Left cardiac atrium (tissue), 4 donors: ENCODE measurements at regions of chr1 and their contacts with region 1.

Region 1: DNA sequence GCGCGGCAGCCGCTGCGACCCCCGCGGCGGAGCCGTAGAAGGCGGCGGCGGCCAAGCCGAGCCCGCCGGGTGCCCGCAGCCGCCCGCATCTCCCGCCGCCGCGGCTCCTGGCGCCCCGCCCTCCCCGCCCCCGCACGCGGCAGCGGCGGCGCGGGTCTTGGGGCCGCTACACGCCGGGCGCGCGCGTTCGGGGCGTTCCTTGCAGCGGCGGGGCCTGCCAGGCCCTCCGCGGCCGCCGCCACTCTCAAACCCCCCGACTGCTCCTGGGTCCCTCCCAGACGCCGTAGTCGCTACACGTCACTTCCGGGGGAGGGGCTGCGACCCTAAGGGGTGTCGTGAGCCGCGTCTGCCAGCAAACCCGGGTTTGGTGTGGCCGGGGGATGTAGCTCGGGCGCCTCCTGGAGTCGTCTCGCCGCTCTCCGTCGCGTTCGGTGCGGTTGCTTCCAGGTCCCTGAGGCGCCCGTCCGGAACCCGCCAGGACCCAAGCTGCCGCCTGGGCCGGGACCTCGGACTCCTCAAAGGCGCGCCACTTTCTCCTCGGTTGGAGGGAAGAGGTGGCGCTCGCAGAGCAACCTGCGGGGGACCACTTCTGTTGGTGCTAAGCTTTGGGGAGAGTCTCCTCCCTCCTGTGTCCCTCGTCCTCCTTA is at the start of gene ELK4:
- DNase-seq: peak; percentile 99
- ATAC-seq: peak; percentile 98
- total RNA-seq, gene ELK4: 36.3 to 39.1 TPM

Region 2: GRCh38 chr1:205536759-205537361 is 95.0 kb before region 1 on chr1:
- intact Hi-C with region 1: loop called in 1 of 2 experiments (anchors 10 kb)
- DNase-seq: no peak
- ATAC-seq: peak; percentile 72 to 79

Region 3: GRCh38 chr1:205591522-205592351 is 40.1 kb before region 1 on chr1:
- intact Hi-C with region 1: loop called (anchors 2 to 5 kb)
- DNase-seq: peak; percentile 88
- ATAC-seq: peak; percentile 94 to 96